ENCODE measurements at regions of chr14 and their contacts with region 1.

Region 1: DNA sequence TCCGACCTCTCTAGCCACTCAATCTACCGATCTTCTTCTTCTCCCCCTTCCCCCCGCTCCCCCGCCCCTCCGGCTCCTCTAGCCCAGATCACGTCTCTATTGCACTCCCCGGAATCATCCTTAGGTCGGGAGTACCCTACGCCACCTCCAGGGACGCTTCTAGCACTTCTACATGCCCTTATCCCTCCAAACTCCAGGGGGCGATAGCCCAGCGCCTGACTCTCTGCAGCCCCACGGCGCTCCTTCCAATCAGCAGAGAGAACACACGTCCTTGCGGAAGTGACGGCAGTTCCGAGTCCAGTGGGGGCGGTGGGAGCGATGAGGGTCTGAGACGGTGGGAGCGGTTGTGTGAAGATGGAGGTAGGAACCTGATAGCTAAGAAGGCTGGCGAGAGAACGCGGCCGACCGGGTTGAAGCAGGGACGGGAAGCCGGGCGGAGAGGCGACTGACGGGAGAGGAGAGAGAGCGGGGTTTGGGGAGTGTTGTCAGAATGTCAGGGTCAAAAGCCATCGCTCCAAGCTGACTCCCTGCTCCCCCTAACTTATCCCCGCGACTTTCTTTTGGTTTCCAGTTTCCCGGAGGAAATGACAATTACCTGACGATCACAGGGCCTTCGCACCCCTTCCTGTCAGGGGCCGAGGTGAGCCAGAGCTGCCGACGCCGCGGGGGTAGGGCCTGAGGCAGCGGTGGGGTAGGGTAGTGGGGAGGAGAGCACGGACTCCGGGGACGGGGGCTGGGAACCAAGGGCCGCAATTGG is at the starts of genes RAB2B and TOX4:
- DNase-seq: peak; percentile 97
- H3K4me3 Mint-ChIP-seq: peak within 1 kb of the TSS; percentile 99
- H3K27ac Mint-ChIP-seq: peak within 1 kb of the TSS; percentile 95
- H3K4me1 Mint-ChIP-seq: peaks cover 31% of the 10 kb centered on the region
- H3K27me3 Mint-ChIP-seq: no peaks in the 10 kb centered on the region
- total RNA-seq, gene RAB2B: 21.2 to 23.6 TPM
- total RNA-seq, gene TOX4: 66.1 to 67.5 TPM

Region 2: GRCh38 chr14:21437063-21437901 is 39.8 kb before region 1 on chr14:
- CTCF ChIA-PET with region 1: interaction called, 18 read pairs
- POLR2A ChIA-PET with region 1: interaction called, 7 read pairs
- intact Hi-C with region 1: loop called (anchors 1 kb)
- DNase-seq: peak; percentile 99
- H3K4me3 Mint-ChIP-seq: peak overlapping the region; percentile 80
- H3K27ac Mint-ChIP-seq: peak overlapping the region; percentile 71
- H3K4me1 Mint-ChIP-seq: peaks cover 52% of the 10 kb centered on the region
- H3K27me3 Mint-ChIP-seq: no peaks in the 10 kb centered on the region

Region 3: GRCh38 chr14:21505012-21505553 is 28.0 kb after region 1 on chr14:
- CTCF ChIA-PET with region 1: interaction called, 18 read pairs
- POLR2A ChIA-PET with region 1: interaction called, 4 read pairs
- intact Hi-C with region 1: no loop called
- DNase-seq: peak; percentile 54
- H3K4me3 Mint-ChIP-seq: no peak overlapping the region
- H3K27ac Mint-ChIP-seq: peak overlapping the region; percentile 67
- H3K4me1 Mint-ChIP-seq: peaks cover 51% of the 10 kb centered on the region
- H3K27me3 Mint-ChIP-seq: no peaks in the 10 kb centered on the region

Region 4: DNA sequence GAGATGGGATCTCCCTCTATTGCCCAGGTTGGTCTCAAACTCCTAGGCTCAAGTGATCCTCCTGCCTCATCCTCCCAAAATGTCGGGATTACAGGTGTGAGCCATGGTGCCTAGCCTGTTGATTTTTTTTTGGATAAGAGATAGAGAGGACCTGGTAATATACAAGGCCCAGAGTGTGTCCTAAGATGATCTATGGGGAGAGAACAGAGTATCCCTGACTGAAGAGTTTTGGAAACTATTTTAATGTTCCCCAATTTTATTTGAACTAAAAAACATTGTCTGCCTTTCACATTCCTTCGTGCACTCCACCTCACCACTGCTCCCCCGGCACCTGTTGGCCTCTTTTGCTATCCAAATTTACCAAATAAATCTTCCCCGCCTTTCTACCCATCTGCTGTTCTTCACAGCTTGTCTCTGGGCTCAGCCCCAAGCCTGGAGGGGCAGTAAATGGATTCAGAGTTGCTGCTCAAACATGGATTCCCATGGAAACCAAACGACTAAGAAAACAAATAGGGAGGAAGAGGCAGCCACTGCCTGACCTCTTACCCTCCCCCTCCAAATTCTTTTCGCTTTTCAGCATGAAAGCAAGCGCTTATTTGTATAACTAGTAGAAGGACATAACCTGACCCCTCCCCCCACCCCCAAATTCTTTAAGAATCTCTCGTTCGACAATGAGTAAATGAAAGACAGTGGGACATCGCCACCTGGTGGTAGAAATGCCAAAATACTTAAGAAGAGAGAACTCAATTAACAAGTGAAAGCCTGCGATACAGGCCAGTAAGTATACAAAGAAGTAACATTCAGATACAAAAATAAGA is 80.2 kb after region 1 on chr14:
- CTCF ChIA-PET with region 1: interaction called, 4 read pairs
- POLR2A ChIA-PET with region 1: no interaction called
- intact Hi-C with region 1: loop called (anchors 1 kb)
- DNase-seq: peak; percentile 76
- H3K4me3 Mint-ChIP-seq: no peak overlapping the region
- H3K27ac Mint-ChIP-seq: peak overlapping the region; percentile 16
- H3K4me1 Mint-ChIP-seq: peaks cover 5% of the 10 kb centered on the region
- H3K27me3 Mint-ChIP-seq: no peaks in the 10 kb centered on the region